Activated CD4-positive, alpha-beta T cell treated with anti-CD3 and anti-CD28 coated beads for 36 hours (primary cell): ENCODE measurements at regions of chrX and their contacts with region 1.

Region 1: GRCh38 chrX:109187473-109188168 is 294.3 kb downstream of the GUCY2F start:
- DNase-seq: no peak
- ATAC-seq: no peak
- H3K4me3 Mint-ChIP-seq: no peak overlapping the region
- H3K27ac Mint-ChIP-seq: no peak overlapping the region
- H3K4me1 Mint-ChIP-seq: no peaks in the 10 kb centered on the region
- H3K27me3 Mint-ChIP-seq: peaks cover 2% of the 10 kb centered on the region

Region 2: GRCh38 chrX:109040057-109040456 is 147.6 kb before region 1 on chrX:
- CTCF ChIA-PET with region 1: no interaction called
- POLR2A ChIA-PET with region 1: no interaction called
- intact Hi-C with region 1: no loop called
- DNase-seq: no peak
- ATAC-seq: no peak
- H3K4me3 Mint-ChIP-seq: no peak overlapping the region
- H3K27ac Mint-ChIP-seq: no peak overlapping the region
- H3K4me1 Mint-ChIP-seq: no peaks in the 10 kb centered on the region
- H3K27me3 Mint-ChIP-seq: no peaks in the 10 kb centered on the region

Region 3: GRCh38 chrX:109172091-109172602 is 15.5 kb before region 1 on chrX:
- CTCF ChIA-PET with region 1: no interaction called
- POLR2A ChIA-PET with region 1: no interaction called
- intact Hi-C with region 1: no loop called
- DNase-seq: no peak
- ATAC-seq: no peak
- H3K4me3 Mint-ChIP-seq: no peak overlapping the region
- H3K27ac Mint-ChIP-seq: no peak overlapping the region
- H3K4me1 Mint-ChIP-seq: no peaks in the 10 kb centered on the region
- H3K27me3 Mint-ChIP-seq: no peaks in the 10 kb centered on the region

Region 4: GRCh38 chrX:109252789-109253188 is 65.2 kb after region 1 on chrX:
- CTCF ChIA-PET with region 1: no interaction called
- POLR2A ChIA-PET with region 1: no interaction called
- intact Hi-C with region 1: loop called in 1 of 2 experiments (anchors 10 kb)
- DNase-seq: no peak
- ATAC-seq: no peak
- H3K4me3 Mint-ChIP-seq: no peak overlapping the region
- H3K27ac Mint-ChIP-seq: no peak overlapping the region
- H3K4me1 Mint-ChIP-seq: no peaks in the 10 kb centered on the region
- H3K27me3 Mint-ChIP-seq: no peaks in the 10 kb centered on the region

Region 5: DNA sequence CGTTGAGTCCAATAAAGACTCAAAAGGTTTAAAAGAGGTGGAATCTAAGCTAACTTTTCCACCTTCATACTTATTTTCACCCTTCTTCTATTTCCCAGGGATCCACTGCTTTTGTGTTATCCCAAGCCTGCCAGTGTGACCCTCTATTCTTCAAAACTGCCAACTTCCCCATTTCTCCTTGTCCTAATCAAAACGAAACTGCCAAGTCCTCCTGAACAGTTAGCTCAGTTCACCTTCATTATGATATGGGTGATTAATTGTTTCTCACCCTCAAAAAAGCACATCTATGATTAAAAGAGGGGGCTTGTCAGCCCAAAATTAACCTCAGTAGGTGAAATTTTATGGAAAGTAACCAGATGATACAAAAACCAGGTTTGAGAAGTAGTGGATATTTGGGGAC is 185.8 kb after region 1 on chrX:
- CTCF ChIA-PET with region 1: no interaction called
- POLR2A ChIA-PET with region 1: no interaction called
- intact Hi-C with region 1: no loop called
- DNase-seq: no peak
- ATAC-seq: no peak
- H3K4me3 Mint-ChIP-seq: no peak overlapping the region
- H3K27ac Mint-ChIP-seq: no peak overlapping the region
- H3K4me1 Mint-ChIP-seq: no peaks in the 10 kb centered on the region
- H3K27me3 Mint-ChIP-seq: no peaks in the 10 kb centered on the region